CD4-positive, alpha-beta T cell (primary cell): ENCODE measurements at regions of chr2 and their contacts with region 1.

Region 1: DNA sequence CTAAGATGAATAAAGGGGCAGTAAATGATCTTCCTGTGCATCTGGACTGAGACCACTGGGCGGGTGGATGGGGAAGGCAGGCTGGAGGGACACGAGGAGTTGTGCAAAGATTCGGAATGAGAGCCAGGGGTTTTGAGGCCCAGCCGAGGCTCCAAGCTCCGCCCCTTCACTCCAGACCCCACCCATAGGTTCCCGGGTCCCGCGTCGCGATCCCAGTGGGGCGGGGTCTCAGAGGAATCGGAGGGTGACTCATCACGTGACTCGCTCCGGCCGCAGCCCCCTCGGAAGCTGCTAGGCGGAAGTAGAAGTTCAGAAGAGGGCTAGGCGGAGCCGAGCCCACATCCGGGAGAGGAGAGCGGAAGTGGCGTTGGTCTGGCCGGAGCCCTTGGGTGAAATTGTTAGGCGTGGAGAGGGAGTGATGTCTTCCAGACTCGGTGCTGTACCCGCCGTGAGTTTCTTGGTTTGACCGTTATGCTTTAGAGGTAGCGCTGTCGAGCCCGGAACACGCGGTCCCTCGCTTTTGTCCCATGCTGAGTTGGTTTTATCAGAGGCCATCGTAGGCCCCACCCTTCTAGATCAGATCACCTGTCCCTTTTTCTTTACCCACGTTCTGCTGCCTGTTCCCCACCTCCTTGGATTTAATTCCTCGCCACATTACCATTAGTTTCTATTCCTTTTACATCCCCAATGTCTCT is at the start of gene ZNF512:
- DNase-seq: peak; percentile 53 to 91 (median 70)
- ATAC-seq: peak; percentile 81
- H3K4me3 ChIP-seq: peak within 1 kb of the TSS; percentile 74
- H3K4me3 Mint-ChIP-seq: peak within 1 kb of the TSS; percentile 94
- H3K27ac ChIP-seq: peak within 1 kb of the TSS; percentile 56 to 80
- H3K27ac Mint-ChIP-seq: peak within 1 kb of the TSS; percentile 92
- H3K4me1 ChIP-seq: peaks cover 46% of the 10 kb centered on the region
- H3K4me1 Mint-ChIP-seq: peaks cover 54% of the 10 kb centered on the region
- H3K27me3 ChIP-seq: no peaks in the 10 kb centered on the region
- H3K27me3 Mint-ChIP-seq: no peaks in the 10 kb centered on the region
- CTCF ChIP-seq: no peak
- total RNA-seq, gene ZNF512: 13.6 to 14.1 TPM

Region 2: DNA sequence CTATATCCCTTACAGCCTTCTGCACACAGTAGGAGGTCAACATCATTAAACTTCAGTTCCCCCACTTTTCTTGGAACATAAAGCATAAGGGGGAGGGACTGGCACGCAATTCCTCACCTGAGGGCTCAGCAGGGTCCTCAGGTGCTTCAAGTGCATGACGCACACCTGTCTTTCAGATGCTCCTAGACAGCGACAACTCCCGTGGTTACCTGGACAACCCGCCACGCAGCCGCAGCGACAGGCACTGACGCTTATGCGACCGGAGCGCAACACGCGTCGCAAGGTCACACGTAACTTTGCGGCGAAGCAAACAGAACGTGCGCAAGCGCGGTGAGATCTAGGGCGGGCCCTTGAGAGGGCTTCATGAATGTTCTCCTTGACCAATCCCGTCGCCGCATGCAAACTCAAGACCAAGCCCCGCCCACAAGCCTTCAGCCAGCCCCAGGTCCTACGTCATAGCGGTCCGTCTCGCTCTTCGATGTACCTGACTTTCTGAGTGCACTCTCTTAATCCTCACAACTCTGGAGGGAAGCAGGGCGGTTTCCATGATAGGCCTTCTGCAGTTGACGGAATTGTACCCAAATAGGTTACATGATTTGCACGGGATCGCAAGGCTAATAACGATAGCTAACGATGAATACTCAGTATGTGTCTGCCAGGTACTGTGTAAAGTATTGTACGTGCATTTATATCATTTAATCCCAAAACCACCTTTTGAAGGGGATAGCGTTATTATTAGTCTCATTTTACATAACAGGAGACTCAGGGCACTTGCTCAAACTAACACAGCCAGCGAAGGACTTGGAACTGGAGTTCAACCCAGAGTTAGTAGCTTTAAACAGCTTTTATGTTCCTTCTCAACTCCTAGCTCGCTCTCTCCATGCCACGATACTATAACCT is 93.1 kb before region 1 on chr2 and contains the start of gene IFT172:
- CTCF ChIA-PET with region 1: interaction called, 3 read pairs
- POLR2A ChIA-PET with region 1: no interaction called
- intact Hi-C with region 1: loop called (anchors 1 to 2 kb)
- DNase-seq: peak; percentile 97 to 100 (median 99)
- ATAC-seq: peak; percentile 85
- H3K4me3 ChIP-seq: peak within 1 kb of the TSS; percentile 61
- H3K4me3 Mint-ChIP-seq: peak within 1 kb of the TSS; percentile 80
- H3K27ac ChIP-seq: peak within 1 kb of the TSS; percentile 55 to 91
- H3K27ac Mint-ChIP-seq: peak within 1 kb of the TSS; percentile 93
- H3K4me1 ChIP-seq: peaks cover 20% of the 10 kb centered on the region
- H3K4me1 Mint-ChIP-seq: peaks cover 18% of the 10 kb centered on the region
- H3K27me3 ChIP-seq: peaks cover 11 to 13% of the 10 kb centered on the region in 2 experiments
- H3K27me3 Mint-ChIP-seq: peaks cover 12% of the 10 kb centered on the region
- CTCF ChIP-seq: no peak
- total RNA-seq, gene IFT172: 13.3 to 14.4 TPM

Region 3: DNA sequence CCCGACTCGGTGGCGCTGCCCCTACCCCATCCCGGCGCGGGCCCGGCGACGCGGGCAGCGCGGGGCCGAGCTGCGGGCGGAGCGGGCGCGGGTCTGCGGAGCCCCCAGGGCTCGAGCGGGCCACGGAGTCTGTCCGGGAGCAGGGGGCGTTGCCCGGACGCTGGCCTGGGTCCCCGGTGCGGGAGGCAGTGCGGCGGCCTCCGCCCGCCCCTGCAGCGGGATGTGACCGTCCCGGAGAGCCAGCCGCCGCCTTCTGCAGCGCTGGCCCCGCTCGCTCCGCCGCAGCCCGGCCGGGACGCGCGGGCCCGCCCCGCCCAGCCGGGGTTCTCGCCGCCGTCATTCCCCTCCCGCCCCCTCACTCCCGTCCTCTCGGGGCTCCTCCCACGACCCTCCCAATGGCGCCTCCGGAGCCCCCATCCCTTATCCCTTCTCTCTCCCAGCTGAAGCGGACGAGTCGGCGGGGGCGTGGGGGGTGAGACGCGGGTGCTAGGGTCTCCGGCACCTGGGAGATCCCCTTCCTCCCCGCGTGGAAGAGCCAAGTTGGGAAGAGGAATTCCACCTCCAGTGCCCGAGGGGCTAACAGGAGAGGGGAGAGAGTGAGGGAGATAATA is 87.8 kb before region 1 on chr2 and contains the start of gene FNDC4:
- CTCF ChIA-PET with region 1: interaction called, 3 read pairs
- POLR2A ChIA-PET with region 1: no interaction called
- intact Hi-C with region 1: loop called in 1 of 2 experiments (anchors 2 kb)
- DNase-seq: peak in 8 of 14 experiments; percentile 4 to 55 (median 24)
- ATAC-seq: peak; percentile 64
- H3K4me3 ChIP-seq: peak within 1 kb of the TSS; percentile 39
- H3K4me3 Mint-ChIP-seq: peak within 1 kb of the TSS; percentile 56
- H3K27ac ChIP-seq: no peak within 1 kb of the TSS
- H3K27ac Mint-ChIP-seq: no peak within 1 kb of the TSS
- H3K4me1 ChIP-seq: peaks cover 14% of the 10 kb centered on the region
- H3K4me1 Mint-ChIP-seq: peaks cover 15% of the 10 kb centered on the region
- H3K27me3 ChIP-seq: peaks cover 38 to 53% of the 10 kb centered on the region in 2 experiments
- H3K27me3 Mint-ChIP-seq: peaks cover 56% of the 10 kb centered on the region
- CTCF ChIP-seq: no peak
- total RNA-seq, gene FNDC4: not detected

Region 4: GRCh38 chr2:27723372-27724144 is 140.7 kb after region 1 on chr2:
- CTCF ChIA-PET with region 1: no interaction called
- POLR2A ChIA-PET with region 1: no interaction called
- intact Hi-C with region 1: no loop called
- DNase-seq: peak in 6 of 14 experiments; percentile 6 to 53 (median 30)
- ATAC-seq: peak; percentile 49
- H3K4me3 ChIP-seq: no peak overlapping the region
- H3K4me3 Mint-ChIP-seq: no peak overlapping the region
- H3K27ac ChIP-seq: no peak overlapping the region
- H3K27ac Mint-ChIP-seq: no peak overlapping the region
- H3K4me1 ChIP-seq: no peaks in the 10 kb centered on the region
- H3K4me1 Mint-ChIP-seq: peaks cover under 1% of the 10 kb centered on the region
- H3K27me3 ChIP-seq: peaks cover 3 to 5% of the 10 kb centered on the region in 2 experiments
- H3K27me3 Mint-ChIP-seq: peaks cover 12% of the 10 kb centered on the region
- CTCF ChIP-seq: peak; percentile 64

Region 5: GRCh38 chr2:27771548-27772335 is 188.9 kb after region 1 on chr2 and contains the start of gene MRPL33:
- CTCF ChIA-PET with region 1: no interaction called
- POLR2A ChIA-PET with region 1: interaction called, 3 read pairs
- intact Hi-C with region 1: loop called in 1 of 2 experiments (anchors 5 kb)
- DNase-seq: peak; percentile 85 to 95 (median 89)
- ATAC-seq: peak; percentile 89
- H3K4me3 ChIP-seq: peak within 1 kb of the TSS; percentile 73
- H3K4me3 Mint-ChIP-seq: peak within 1 kb of the TSS; percentile 100
- H3K27ac ChIP-seq: peak within 1 kb of the TSS; percentile 74 to 91
- H3K27ac Mint-ChIP-seq: peak within 1 kb of the TSS; percentile 100
- H3K4me1 ChIP-seq: peaks cover 15% of the 10 kb centered on the region
- H3K4me1 Mint-ChIP-seq: peaks cover 59% of the 10 kb centered on the region
- H3K27me3 ChIP-seq: no peaks in the 10 kb centered on the region
- H3K27me3 Mint-ChIP-seq: no peaks in the 10 kb centered on the region
- CTCF ChIP-seq: no peak
- total RNA-seq, gene MRPL33: 33.1 to 37.2 TPM